Activated T-helper 2 cell treated with anti-CD3 and anti-CD28 coated beads, Interferon-gamma antibody, Interleukin-2, Interleukin-4, amounts not matched to agents 10 μg/mL and 5 μg/mL and 100 μg/mL, durations not matched to agents 14 hours and 24 hours and 36 hours (primary cell): ENCODE measurements at regions of chr10 and their contacts with region 1.

Region 1: DNA sequence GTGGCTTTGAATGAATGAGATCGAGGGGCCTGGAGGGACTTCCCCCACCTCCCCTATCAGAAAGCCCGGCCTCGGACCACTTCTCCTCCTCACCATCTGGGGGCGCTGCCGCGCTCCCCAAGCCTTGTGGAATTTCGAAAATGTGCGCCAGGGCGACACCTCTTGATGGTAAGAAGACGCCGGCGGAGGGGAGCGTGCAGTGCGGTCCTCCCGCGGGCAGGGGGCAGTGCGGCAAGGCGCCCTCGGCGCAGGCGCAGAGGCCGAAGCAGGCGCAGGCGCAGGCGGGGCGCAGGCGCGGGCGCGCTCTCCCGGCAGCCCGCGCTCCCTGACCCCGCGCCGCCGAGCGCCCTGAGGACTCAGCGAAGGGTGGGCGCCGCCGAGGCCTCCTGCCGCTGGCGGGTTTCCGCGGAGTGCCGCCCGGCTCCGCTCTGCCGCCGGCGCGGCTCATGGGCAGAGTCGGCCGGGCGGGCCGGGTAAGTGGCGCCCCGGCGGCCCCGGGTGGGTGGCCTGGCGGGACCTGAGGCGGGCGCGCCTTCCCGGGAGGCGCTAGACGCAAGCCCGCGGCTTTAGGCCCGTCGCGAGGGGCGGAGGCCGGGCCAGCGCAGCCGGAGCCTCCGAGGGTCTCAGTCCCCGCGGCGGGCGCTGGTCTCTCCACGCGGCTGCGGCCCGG is at the start of gene RBM17:
- DNase-seq: peak; percentile 98
- H3K4me3 Mint-ChIP-seq: peak within 1 kb of the TSS; percentile 98
- H3K27ac Mint-ChIP-seq: peak within 1 kb of the TSS; percentile 80
- H3K4me1 Mint-ChIP-seq: peaks cover 63% of the 10 kb centered on the region
- H3K27me3 Mint-ChIP-seq: no peaks in the 10 kb centered on the region
- total RNA-seq, gene RBM17: 257 and 266 TPM in 2 replicates

Region 2: DNA sequence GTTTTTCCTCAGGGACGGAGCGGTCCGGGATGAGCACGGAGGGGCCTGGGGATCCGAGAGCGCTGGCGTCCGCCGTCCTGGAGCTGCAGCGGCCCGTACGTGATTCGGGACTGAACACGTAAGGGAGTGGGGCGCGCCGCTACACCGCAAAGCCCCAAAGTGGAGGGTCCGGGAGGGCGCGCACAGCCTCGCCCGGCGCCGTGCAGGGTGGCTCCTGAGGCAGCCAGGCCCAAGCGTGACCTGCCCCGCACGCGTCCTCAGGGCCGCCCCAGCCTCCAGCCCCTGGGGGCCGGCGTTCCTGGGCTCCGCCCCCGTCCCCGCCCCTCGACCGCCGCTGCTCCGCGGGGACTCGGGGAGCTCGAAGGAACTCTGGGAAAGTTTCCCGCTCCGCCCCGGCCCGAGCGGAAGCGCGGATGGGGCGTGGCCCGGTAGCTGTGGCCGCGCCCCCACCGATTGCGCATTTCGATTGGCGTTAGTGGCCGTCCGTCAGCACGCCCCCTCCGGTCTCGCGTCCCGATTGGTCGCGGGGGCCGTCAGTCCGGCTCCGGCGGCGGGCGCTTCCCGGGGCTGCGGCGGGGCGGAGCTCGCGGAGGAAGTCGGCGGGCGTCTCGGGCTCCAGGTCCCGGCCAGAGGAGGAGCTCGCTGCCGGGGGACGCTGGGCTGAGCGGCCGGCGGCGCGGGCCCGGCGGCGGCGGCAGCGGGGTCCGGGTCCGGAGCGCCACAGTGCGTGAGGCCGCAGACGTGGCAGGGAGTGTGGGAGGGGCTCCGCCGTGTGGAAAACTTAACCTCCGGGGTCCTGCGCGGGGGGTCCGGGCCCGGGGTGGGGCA is 199.0 kb before region 1 on chr10 and contains the starts of genes ANKRD16 and FBH1:
- intact Hi-C with region 1: loop called (anchors 5 kb)
- DNase-seq: peak; percentile 98
- H3K4me3 Mint-ChIP-seq: peak within 1 kb of the TSS; percentile 94
- H3K27ac Mint-ChIP-seq: peak within 1 kb of the TSS; percentile 79
- H3K4me1 Mint-ChIP-seq: peaks cover 41% of the 10 kb centered on the region
- H3K27me3 Mint-ChIP-seq: no peaks in the 10 kb centered on the region
- total RNA-seq, gene ANKRD16: 10.4 and 11.6 TPM in 2 replicates
- total RNA-seq, gene FBH1: 57.2 and 58.0 TPM in 2 replicates

Region 3: GRCh38 chr10:6014241-6014761 is 74.6 kb before region 1 on chr10:
- intact Hi-C with region 1: loop called (anchors 2 kb)
- DNase-seq: peak; percentile 46
- H3K4me3 Mint-ChIP-seq: no peak overlapping the region
- H3K27ac Mint-ChIP-seq: peak overlapping the region; percentile 34
- H3K4me1 Mint-ChIP-seq: peaks cover 60% of the 10 kb centered on the region
- H3K27me3 Mint-ChIP-seq: no peaks in the 10 kb centered on the region

Region 4: GRCh38 chr10:6443701-6444100 is 354.8 kb after region 1 on chr10:
- intact Hi-C with region 1: no loop called
- DNase-seq: no peak
- H3K4me3 Mint-ChIP-seq: no peak overlapping the region
- H3K27ac Mint-ChIP-seq: no peak overlapping the region
- H3K4me1 Mint-ChIP-seq: peaks cover 40% of the 10 kb centered on the region
- H3K27me3 Mint-ChIP-seq: no peaks in the 10 kb centered on the region